ENCODE measurements at regions of chr6 and their contacts with region 1.

Region 1: DNA sequence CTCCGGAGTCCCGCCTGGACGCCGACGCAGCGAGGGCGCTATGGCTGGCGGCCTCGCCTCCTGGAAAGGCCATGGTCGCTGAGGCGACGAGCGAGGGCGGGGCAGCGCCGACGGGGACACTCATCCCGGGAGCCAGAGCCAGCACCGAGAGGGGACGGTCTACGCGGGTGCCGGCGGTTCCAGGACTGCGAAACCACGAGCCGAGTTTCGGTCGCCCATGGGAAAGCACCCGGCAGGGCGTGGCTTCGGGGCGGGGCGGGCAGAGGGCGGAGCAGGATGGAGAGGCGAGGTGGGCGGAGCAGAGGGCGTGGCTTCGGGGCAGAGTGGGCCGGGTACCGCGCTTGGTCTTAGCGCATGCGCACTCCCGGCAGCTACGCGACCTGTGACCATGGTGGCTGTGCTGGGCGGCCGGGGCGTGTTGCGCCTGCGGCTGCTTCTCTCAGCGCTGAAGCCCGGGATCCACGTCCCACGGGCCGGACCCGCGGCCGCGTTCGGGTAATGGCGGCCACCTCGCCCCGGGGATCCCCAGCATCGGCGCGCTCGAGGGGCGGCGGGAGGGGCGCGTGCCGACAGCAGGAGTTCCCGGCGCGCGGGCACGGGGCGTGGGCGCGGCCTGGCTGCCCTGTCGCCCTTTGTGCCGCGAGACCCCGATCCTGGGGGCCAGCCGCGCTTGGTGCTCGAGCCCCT is at the start of gene BPHL:
- DNase-seq: peak; percentile 96 to 99 (median 97)
- H3K4me3 ChIP-seq: peak within 1 kb of the TSS; percentile 57 to 83 (median 62)
- H3K4me3 Mint-ChIP-seq: peak within 1 kb of the TSS; percentile 83 to 92
- H3K27ac ChIP-seq: peak within 1 kb of the TSS; percentile 87 to 89
- H3K27ac Mint-ChIP-seq: peak within 1 kb of the TSS; percentile 86 to 97 (median 93)
- H3K4me1 ChIP-seq: peaks cover 18 to 24% of the 10 kb centered on the region in 2 donors
- H3K4me1 Mint-ChIP-seq: peaks cover 31% of the 10 kb centered on the region
- H3K27me3 ChIP-seq: no peaks in the 10 kb centered on the region
- H3K27me3 Mint-ChIP-seq: peaks cover 3 to 10% (median 4%) of the 10 kb centered on the region in 3 donors
- CTCF ChIP-seq: no peak
- polyA plus RNA-seq, gene BPHL: 4.6 to 7.8 (median 5.9) TPM

Region 2: DNA sequence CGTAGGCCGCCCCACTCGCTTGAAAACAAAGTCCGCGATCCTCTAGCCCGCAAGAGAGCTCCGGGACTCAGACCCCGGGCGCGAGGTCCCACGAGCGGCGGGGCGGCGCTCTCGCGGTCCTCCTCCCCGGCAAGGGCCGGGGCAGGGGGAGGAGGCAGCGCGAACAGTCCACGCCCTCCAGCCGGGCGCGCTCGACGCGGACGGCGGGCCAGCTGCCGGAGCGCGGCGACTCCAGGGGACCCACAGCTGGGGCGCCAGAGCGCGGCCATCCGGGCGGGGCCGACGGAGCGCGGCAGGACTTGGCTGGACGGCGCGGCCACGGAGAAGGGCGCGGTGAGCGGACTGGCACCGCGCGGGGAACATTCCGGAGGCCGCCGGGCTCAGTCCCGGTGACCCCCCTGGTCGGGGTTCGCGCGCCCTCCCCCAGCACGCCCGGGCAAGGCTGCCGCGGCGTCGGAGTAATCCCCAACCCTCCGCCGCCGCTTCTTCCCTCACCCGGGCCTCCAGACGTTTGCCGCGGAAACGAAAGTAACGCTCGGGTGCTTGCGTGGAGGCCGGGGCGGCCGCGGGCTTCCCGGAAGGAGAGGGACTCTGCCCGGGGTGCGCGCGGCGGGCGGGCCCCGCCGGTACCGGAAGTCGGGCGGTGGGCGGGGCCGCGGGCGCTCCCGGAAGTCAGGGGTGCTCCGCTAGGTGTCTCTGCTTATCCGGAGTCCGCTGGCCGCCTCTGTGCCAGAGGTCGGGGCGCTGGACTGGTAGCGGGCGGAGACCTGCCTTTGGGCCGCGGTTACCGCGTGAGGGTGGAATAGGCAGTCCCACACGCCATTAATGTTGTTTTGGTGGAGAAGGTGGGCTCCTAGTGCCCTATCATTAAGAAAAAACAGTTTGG is 49.9 kb before region 1 on chr6 and contains the start of gene RIPK1:
- intact Hi-C with region 1: loop called (anchors 2 to 5 kb)
- DNase-seq: peak; percentile 80 to 89 (median 86)
- H3K4me3 ChIP-seq: peak within 1 kb of the TSS; percentile 83 to 91 (median 84)
- H3K4me3 Mint-ChIP-seq: peak within 1 kb of the TSS; percentile 91 to 97
- H3K27ac ChIP-seq: peak within 1 kb of the TSS; percentile 89 to 93
- H3K27ac Mint-ChIP-seq: peak within 1 kb of the TSS; percentile 94 to 98 (median 97)
- H3K4me1 ChIP-seq: peaks cover 24 to 41% of the 10 kb centered on the region in 2 donors
- H3K4me1 Mint-ChIP-seq: peaks cover 40% of the 10 kb centered on the region
- H3K27me3 ChIP-seq: no peaks in the 10 kb centered on the region
- H3K27me3 Mint-ChIP-seq: peaks cover 2 to 5% (median 5%) of the 10 kb centered on the region in 3 donors
- CTCF ChIP-seq: peak; percentile 11
- polyA plus RNA-seq, gene RIPK1: 6.0 to 9.6 (median 9.6) TPM

Region 3: DNA sequence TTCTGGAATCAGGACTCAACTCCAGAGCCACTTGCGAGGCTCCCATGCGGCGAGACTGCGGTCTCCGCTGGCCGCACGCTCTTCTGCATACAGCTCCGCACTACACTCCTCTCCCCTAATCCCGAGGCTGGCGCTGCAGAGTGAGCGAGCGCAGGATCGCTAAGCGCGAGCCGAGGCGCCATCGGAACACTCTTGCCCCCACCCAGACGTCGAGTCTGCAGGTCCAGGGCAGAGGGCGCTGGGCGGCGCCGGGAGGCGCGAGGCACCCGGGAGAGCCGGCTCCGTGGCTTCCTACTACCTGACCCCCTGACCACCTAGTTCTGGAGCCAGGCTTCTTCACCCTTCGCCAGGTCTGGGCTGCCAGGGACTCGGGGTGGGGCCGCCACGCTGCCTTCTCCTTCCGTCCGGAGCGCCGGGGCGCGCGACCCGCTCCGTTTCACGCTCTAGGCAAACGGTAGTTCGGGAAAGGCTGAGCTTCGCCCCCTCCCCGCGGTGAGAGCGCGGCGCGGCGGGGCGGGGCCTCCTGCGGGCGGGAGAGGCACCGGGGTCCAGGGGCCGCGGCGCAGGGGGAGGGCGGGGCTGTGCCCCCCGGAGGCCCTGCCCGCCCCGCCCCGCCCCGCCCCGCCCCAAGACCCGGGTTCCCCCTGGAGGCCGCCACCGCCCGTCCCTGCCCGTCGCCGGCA is 44.2 kb after region 1 on chr6:
- intact Hi-C with region 1: loop called in 1 of 2 experiments (anchors 5 kb)
- DNase-seq: peak; percentile 50 to 60 (median 53)
- H3K4me3 ChIP-seq: peak overlapping the region; percentile 56 to 81 (median 68)
- H3K4me3 Mint-ChIP-seq: peak overlapping the region; percentile 83 to 94
- H3K27ac ChIP-seq: peak overlapping the region; percentile 32 to 79
- H3K27ac Mint-ChIP-seq: peak overlapping the region; percentile 34 to 92 (median 80)
- H3K4me1 ChIP-seq: peaks cover 30 to 64% of the 10 kb centered on the region in 2 donors
- H3K4me1 Mint-ChIP-seq: peaks cover 45% of the 10 kb centered on the region
- H3K27me3 ChIP-seq: peaks cover 7 to 33% of the 10 kb centered on the region in 2 donors
- H3K27me3 Mint-ChIP-seq: peaks cover 43 to 55% (median 52%) of the 10 kb centered on the region in 3 donors
- CTCF ChIP-seq: no peak

Region 4: GRCh38 chr6:3258720-3259490 is 140.4 kb after region 1 on chr6 and contains the start of gene PSMG4:
- intact Hi-C with region 1: loop called (anchors 2 to 5 kb)
- DNase-seq: peak; percentile 79 to 90 (median 89)
- H3K4me3 ChIP-seq: peak within 1 kb of the TSS; percentile 71 to 91 (median 79)
- H3K4me3 Mint-ChIP-seq: peak within 1 kb of the TSS; percentile 99 to 100
- H3K27ac ChIP-seq: peak within 1 kb of the TSS; percentile 31 to 71
- H3K27ac Mint-ChIP-seq: peak within 1 kb of the TSS; percentile 74 to 93 (median 85)
- H3K4me1 ChIP-seq: peaks cover 19 to 23% of the 10 kb centered on the region in 2 donors
- H3K4me1 Mint-ChIP-seq: peaks cover 30% of the 10 kb centered on the region
- H3K27me3 ChIP-seq: peaks cover 0 to 18% of the 10 kb centered on the region in 2 donors
- H3K27me3 Mint-ChIP-seq: peaks cover 13 to 21% (median 18%) of the 10 kb centered on the region in 3 donors
- CTCF ChIP-seq: no peak
- polyA plus RNA-seq, gene PSMG4: 23.6 to 31.1 (median 27.9) TPM

Region 5: GRCh38 chr6:5003604-5004372 is 1885.3 kb after region 1 on chr6 and contains the start of gene RPP40:
- intact Hi-C with region 1: loop called in 1 of 2 experiments (anchors 5 kb)
- DNase-seq: peak; percentile 93 to 95 (median 95)
- H3K4me3 ChIP-seq: peak within 1 kb of the TSS; percentile 51 to 88 (median 67)
- H3K4me3 Mint-ChIP-seq: peak within 1 kb of the TSS; percentile 94 to 97
- H3K27ac ChIP-seq: peak within 1 kb of the TSS; percentile 57 to 79
- H3K27ac Mint-ChIP-seq: peak within 1 kb of the TSS; percentile 80 to 95 (median 92)
- H3K4me1 ChIP-seq: peaks cover 11 to 12% of the 10 kb centered on the region in 2 donors
- H3K4me1 Mint-ChIP-seq: peaks cover 8% of the 10 kb centered on the region
- H3K27me3 ChIP-seq: no peaks in the 10 kb centered on the region
- H3K27me3 Mint-ChIP-seq: no peaks in the 10 kb centered on the region
- CTCF ChIP-seq: peak; percentile 94
- polyA plus RNA-seq, gene RPP40: 1.7 to 11.1 (median 7.4) TPM

Measured in CD14-positive monocyte (primary cell).